Activated CD4-positive, alpha-beta T cell treated with anti-CD3 and anti-CD28 coated beads for 36 hours (primary cell): ENCODE measurements at regions of chr3 and their contacts with region 1.

Region 1: GRCh38 chr3:170221924-170222646 is at the start of gene PRKCI:
- DNase-seq: peak; percentile 95
- ATAC-seq: peak; percentile 95
- H3K4me3 Mint-ChIP-seq: peak within 1 kb of the TSS; percentile 89
- H3K27ac Mint-ChIP-seq: peak within 1 kb of the TSS; percentile 95
- H3K4me1 Mint-ChIP-seq: peaks cover 32% of the 10 kb centered on the region
- H3K27me3 Mint-ChIP-seq: no peaks in the 10 kb centered on the region
- total RNA-seq, gene PRKCI: 32.3 to 33.0 TPM

Region 2: GRCh38 chr3:169836078-169836941 is 385.8 kb before region 1 on chr3:
- CTCF ChIA-PET with region 1: no interaction called
- POLR2A ChIA-PET with region 1: no interaction called
- intact Hi-C with region 1: no loop called
- DNase-seq: no peak
- ATAC-seq: no peak
- H3K4me3 Mint-ChIP-seq: no peak overlapping the region
- H3K27ac Mint-ChIP-seq: no peak overlapping the region
- H3K4me1 Mint-ChIP-seq: no peaks in the 10 kb centered on the region
- H3K27me3 Mint-ChIP-seq: peaks cover 4% of the 10 kb centered on the region

Region 3: DNA sequence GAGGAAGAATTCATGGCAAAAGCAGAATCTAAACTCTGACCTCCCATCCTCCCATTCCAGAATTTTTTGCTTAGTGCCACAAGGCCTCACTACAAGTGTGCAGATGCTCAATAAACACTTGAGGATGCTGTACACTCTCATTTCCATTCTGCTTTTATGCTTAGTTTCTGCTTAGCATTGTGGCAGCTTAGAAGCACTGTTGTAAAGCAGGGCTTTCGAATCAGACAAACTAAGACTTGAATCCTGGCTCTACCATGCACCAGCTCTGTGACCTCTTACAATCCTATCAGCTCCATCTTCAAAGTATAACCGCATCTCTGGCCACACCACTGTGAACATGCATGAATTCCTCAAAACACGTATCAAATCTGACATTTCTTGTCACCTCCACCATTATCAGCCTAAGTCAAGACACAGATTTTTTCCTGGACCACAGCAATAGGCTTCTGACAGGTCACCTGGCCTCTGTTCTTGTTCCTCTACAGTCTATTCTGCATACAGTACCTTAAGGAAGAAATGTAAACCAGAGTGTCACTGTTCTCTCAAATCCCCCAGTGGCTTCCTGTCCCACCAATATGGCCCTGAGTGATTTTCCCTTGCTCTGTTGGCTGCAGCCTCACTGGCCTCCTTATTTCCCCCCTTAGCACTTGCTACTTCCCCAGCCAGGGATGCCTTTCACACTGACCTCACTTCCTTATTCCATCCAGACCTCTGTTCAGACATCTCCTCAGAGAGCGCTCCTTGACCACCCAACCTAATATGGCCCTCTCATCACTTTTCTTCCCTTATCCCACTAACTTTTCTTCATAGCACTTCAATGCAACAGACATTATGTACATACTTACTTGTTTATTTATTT is 32.5 kb before region 1 on chr3:
- CTCF ChIA-PET with region 1: interaction called, 3 read pairs
- POLR2A ChIA-PET with region 1: no interaction called
- intact Hi-C with region 1: loop called in 1 of 2 experiments (anchors 2 kb)
- DNase-seq: no peak
- ATAC-seq: peak; percentile 17
- H3K4me3 Mint-ChIP-seq: no peak overlapping the region
- H3K27ac Mint-ChIP-seq: no peak overlapping the region
- H3K4me1 Mint-ChIP-seq: peaks cover 7% of the 10 kb centered on the region
- H3K27me3 Mint-ChIP-seq: no peaks in the 10 kb centered on the region